Activated naive CD4-positive, alpha-beta T cell treated with anti-CD3 and anti-CD28 coated beads, Interleukin-2, amount 10 ng/mL, durations not matched to agents 7 days and 5 days (primary cell): ENCODE measurements at regions of chr11 and their contacts with region 1.

Region 1: GRCh38 chr11:3037040-3037944 is 19.9 kb downstream of the CARS1 start:
- DNase-seq: peak; percentile 67
- H3K4me3 Mint-ChIP-seq: no peak overlapping the region
- H3K27ac Mint-ChIP-seq: peak overlapping the region; percentile 63
- H3K4me1 Mint-ChIP-seq: peaks cover 35% of the 10 kb centered on the region
- H3K27me3 Mint-ChIP-seq: no peaks in the 10 kb centered on the region

Region 2: DNA sequence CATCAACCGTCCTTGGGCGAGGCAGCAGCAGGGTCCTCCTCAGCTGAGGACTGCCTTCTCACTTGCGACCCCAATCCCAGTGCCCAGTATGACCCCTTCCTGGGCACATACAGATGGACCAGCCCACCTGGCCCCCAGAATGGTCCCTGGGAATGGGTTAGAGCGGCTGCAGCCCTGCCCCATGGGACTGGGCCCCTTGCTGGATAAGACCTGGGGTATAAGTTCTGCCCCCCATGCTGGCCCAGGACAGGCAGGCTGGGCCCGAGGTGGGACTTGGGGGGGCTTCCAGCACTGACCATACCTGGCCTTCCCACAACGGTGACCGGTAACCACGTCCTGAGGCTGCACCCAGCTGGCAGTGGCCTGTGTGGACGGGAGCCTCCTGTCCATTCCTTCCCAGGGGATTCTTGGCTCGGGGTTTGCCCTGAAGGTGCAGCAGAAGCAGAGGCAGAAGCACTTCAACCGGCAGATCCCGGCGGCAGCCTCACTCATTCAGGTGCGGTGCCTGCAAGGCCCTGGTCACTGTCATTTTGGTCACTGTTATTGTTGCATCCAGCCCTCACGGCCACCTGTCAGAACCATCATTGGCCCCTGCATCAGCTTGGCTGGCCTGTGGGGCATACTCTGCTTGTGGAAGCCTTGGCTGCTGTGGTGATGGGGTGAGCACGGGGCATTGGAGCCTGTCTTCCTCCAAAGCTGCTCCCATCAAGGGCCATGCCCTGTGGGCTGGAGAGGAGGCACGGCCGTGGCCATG is 452.3 kb before region 1 on chr11:
- CTCF ChIA-PET with region 1: no interaction called
- DNase-seq: peak; percentile 19
- H3K4me3 Mint-ChIP-seq: no peak overlapping the region
- H3K27ac Mint-ChIP-seq: no peak overlapping the region
- H3K4me1 Mint-ChIP-seq: no peaks in the 10 kb centered on the region
- H3K27me3 Mint-ChIP-seq: no peaks in the 10 kb centered on the region

Region 3: GRCh38 chr11:3014057-3014938 is 23.0 kb before region 1 on chr11:
- CTCF ChIA-PET with region 1: interaction called, 10 read pairs
- DNase-seq: peak; percentile 93
- H3K4me3 Mint-ChIP-seq: peak overlapping the region; percentile 45
- H3K27ac Mint-ChIP-seq: peak overlapping the region; percentile 99
- H3K4me1 Mint-ChIP-seq: peaks cover 95% of the 10 kb centered on the region
- H3K27me3 Mint-ChIP-seq: no peaks in the 10 kb centered on the region